Gastrocnemius medialis (tissue), 4 donors: ENCODE measurements at regions of chr10 and their contacts with region 1.

Region 1: DNA sequence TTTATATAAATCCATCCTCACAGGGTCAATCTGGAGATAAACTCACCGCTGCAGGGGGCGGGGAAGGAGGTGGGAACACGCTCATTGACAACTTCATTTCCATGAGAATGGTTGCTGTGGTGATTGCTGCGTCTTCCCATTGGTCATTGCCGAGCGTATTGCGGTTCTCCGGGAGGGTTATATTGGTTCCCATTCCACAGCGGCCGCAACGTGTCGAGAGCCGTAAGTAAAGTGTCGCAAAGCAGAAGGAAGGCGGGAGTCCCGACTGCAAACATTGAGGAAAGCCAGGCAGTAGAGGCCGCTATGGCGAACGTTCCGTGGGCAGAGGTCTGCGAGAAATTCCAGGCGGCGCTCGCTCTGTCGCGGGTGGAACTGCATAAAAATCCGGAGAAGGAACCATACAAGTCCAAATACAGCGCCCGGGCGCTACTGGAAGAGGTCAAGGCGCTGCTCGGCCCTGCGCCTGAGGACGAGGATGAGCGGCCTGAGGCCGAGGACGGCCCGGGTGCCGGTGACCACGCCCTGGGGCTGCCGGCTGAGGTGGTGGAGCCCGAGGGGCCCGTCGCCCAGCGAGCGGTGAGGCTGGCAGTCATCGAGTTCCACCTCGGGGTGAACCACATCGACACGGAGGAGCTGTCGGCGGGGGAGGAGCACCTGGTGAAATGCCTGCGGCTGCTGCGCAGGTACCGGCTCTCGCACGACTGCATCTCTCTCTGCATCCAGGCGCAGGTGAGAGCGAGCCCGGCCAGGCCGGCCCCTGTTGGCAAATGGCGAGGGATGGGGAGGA is at the start of gene KIFBP:
- DNase-seq: peak; percentile 88 to 92
- ATAC-seq: peak; percentile 98
- H3K4me3 ChIP-seq: peak within 1 kb of the TSS; percentile 90 to 92 (median 90)
- H3K27ac ChIP-seq: peak within 1 kb of the TSS; percentile 78 to 87 (median 84)
- H3K4me1 ChIP-seq: peaks cover 35 to 45% of the 10 kb centered on the region in 2 donors
- H3K27me3 ChIP-seq: no peaks in the 10 kb centered on the region
- CTCF ChIP-seq: peak in 4 of 5 experiments; percentile 17 to 60 (median 44)
- POLR2A ChIP-seq: peak; percentile 57 to 73
- total RNA-seq, gene KIFBP: 24.0 to 41.3 (median 33.9) TPM

Region 2: GRCh38 chr10:68924593-68924992 is 64.1 kb before region 1 on chr10:
- in situ Hi-C with region 1: no loop called
- intact Hi-C with region 1: no loop called
- DNase-seq: no peak
- ATAC-seq: no peak
- H3K4me3 ChIP-seq: no peak overlapping the region
- H3K27ac ChIP-seq: no peak overlapping the region
- H3K4me1 ChIP-seq: no peaks in the 10 kb centered on the region
- H3K27me3 ChIP-seq: no peaks in the 10 kb centered on the region
- CTCF ChIP-seq: no peak
- POLR2A ChIP-seq: no peak

Region 3: GRCh38 chr10:69123747-69124562 is 135.2 kb after region 1 on chr10 and contains the start of gene VPS26A:
- in situ Hi-C with region 1: no loop called
- intact Hi-C with region 1: loop called (anchors 2 kb)
- DNase-seq: peak; percentile 98 to 99
- ATAC-seq: peak; percentile 87 to 91
- H3K4me3 ChIP-seq: peak within 1 kb of the TSS; percentile 57 to 90 (median 85)
- H3K27ac ChIP-seq: peak within 1 kb of the TSS; percentile 91 to 97 (median 96)
- H3K4me1 ChIP-seq: peaks cover 18 to 20% of the 10 kb centered on the region in 2 donors
- H3K27me3 ChIP-seq: no peaks in the 10 kb centered on the region
- CTCF ChIP-seq: peak in 3 of 5 experiments; percentile 4 to 46 (median 27)
- POLR2A ChIP-seq: peak; percentile 95 to 96
- total RNA-seq, gene VPS26A: 21.0 to 31.1 (median 25.4) TPM

Region 4: GRCh38 chr10:69408318-69409175 is 419.8 kb after region 1 on chr10:
- in situ Hi-C with region 1: loop called in 1 of 4 experiments (anchors 25 kb)
- intact Hi-C with region 1: no loop called
- DNase-seq: peak; percentile 85 to 92
- ATAC-seq: peak; percentile 73 to 81
- H3K4me3 ChIP-seq: peak overlapping the region; percentile 51 to 67 (median 59)
- H3K27ac ChIP-seq: peak overlapping the region; percentile 87 to 99 (median 90)
- H3K4me1 ChIP-seq: peaks cover 17 to 31% of the 10 kb centered on the region in 2 donors
- H3K27me3 ChIP-seq: no peaks in the 10 kb centered on the region
- CTCF ChIP-seq: peak; percentile 19 to 91 (median 64)
- POLR2A ChIP-seq: peak; percentile 35 to 43